MCF 10A (cell line): ENCODE measurements at regions of chr14 and their contacts with region 1.

Region 1: GRCh38 chr14:94136575-94137331 is 7.3 kb upstream of the IFI27L2 start:
- DNase-seq: peak; percentile 82
- H3K4me3 Mint-ChIP-seq: no peak overlapping the region
- H3K27ac Mint-ChIP-seq: no peak overlapping the region
- H3K4me1 Mint-ChIP-seq: no peaks in the 10 kb centered on the region
- H3K27me3 Mint-ChIP-seq: no peaks in the 10 kb centered on the region
- CTCF ChIP-seq: peak; percentile 94

Region 2: GRCh38 chr14:94036313-94037050 is 100.3 kb before region 1 on chr14:
- CTCF ChIA-PET with region 1: interaction called, 99 read pairs
- POLR2A ChIA-PET with region 1: interaction called, 5 read pairs
- intact Hi-C with region 1: loop called (anchors 1 kb)
- DNase-seq: peak; percentile 79
- H3K4me3 Mint-ChIP-seq: no peak overlapping the region
- H3K27ac Mint-ChIP-seq: no peak overlapping the region
- H3K4me1 Mint-ChIP-seq: peaks cover 5% of the 10 kb centered on the region
- H3K27me3 Mint-ChIP-seq: no peaks in the 10 kb centered on the region
- CTCF ChIP-seq: peak; percentile 74

Region 3: GRCh38 chr14:94173885-94174603 is 37.3 kb after region 1 on chr14 and contains the start of gene PPP4R4:
- CTCF ChIA-PET with region 1: interaction called, 37 read pairs
- POLR2A ChIA-PET with region 1: interaction called, 5 read pairs
- intact Hi-C with region 1: no loop called
- DNase-seq: peak; percentile 71
- H3K4me3 Mint-ChIP-seq: peak within 1 kb of the TSS; percentile 69
- H3K27ac Mint-ChIP-seq: no peak within 1 kb of the TSS
- H3K4me1 Mint-ChIP-seq: peaks cover 25% of the 10 kb centered on the region
- H3K27me3 Mint-ChIP-seq: no peaks in the 10 kb centered on the region
- CTCF ChIP-seq: no peak
- total RNA-seq, gene PPP4R4: 0.66 and 0.91 TPM in 2 replicates

Region 4: DNA sequence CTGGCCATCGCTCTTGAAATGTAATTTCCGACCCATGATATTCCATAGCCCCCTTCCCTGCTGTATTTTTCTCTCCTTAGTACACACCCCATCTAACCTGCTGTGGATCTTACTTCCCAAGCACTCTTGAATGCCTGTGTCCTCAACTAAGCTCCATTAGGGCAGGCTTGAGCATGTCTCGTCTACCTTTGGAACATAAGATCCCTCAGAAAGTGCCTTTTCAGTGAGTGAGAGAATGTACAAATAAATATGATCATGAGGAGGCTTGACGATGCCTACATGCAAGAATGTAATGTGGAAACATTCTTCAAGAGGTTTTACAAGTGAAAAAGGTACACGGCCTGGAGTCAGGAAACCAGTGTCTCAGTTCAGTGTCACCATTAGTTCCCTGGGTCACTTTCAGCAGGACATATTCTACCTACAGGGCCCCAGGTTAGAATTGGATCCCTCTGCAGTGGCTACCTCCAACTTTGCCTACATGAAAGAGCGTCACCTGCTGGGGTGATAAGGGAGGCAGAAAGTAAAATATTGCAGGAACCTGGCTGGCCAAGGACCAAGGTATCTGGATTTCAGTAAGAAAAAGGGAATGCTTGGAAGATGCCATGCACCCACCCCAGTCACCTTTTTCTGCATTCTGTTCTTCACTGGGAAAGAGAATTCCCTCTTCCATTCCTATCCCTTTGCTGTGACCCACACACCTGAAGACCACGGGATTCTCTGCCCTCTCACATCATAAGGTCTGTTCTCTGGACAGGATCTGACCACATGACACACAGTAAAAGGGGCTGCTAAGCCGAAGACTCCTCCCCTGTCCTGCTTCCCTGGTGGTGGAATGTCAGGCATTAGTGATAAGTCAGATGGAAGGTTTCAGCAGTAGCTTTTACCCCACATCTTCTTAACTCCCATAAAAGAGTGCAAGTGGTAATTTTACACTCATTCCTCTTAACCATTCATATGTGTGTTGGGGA is 276.2 kb after region 1 on chr14:
- CTCF ChIA-PET with region 1: interaction called, 4 read pairs
- POLR2A ChIA-PET with region 1: no interaction called
- intact Hi-C with region 1: loop called (anchors 2 kb)
- DNase-seq: peak; percentile 62
- H3K4me3 Mint-ChIP-seq: no peak overlapping the region
- H3K27ac Mint-ChIP-seq: no peak overlapping the region
- H3K4me1 Mint-ChIP-seq: peaks cover 8% of the 10 kb centered on the region
- H3K27me3 Mint-ChIP-seq: no peaks in the 10 kb centered on the region
- CTCF ChIP-seq: peak; percentile 45